Activated CD4-positive, alpha-beta T cell treated with anti-CD3 and anti-CD28 coated beads for 36 hours (primary cell): ENCODE measurements at regions of chr5 and their contacts with region 1.

Region 1: GRCh38 chr5:179623003-179623880 is at the start of gene HNRNPH1:
- DNase-seq: peak; percentile 99
- ATAC-seq: peak; percentile 79
- H3K4me3 Mint-ChIP-seq: peak within 1 kb of the TSS; percentile 94
- H3K27ac Mint-ChIP-seq: peak within 1 kb of the TSS; percentile 100
- H3K4me1 Mint-ChIP-seq: peaks cover 37% of the 10 kb centered on the region
- H3K27me3 Mint-ChIP-seq: no peaks in the 10 kb centered on the region
- total RNA-seq, gene HNRNPH1: 634 to 659 TPM

Region 2: GRCh38 chr5:178626484-178627258 is 996.6 kb before region 1 on chr5 and contains the start of gene CLK4:
- CTCF ChIA-PET with region 1: interaction called, 4 read pairs
- POLR2A ChIA-PET with region 1: no interaction called
- intact Hi-C with region 1: loop called in 1 of 2 experiments (anchors 2 kb)
- DNase-seq: peak; percentile 98
- ATAC-seq: peak; percentile 79
- H3K4me3 Mint-ChIP-seq: peak within 1 kb of the TSS; percentile 93
- H3K27ac Mint-ChIP-seq: peak within 1 kb of the TSS; percentile 98
- H3K4me1 Mint-ChIP-seq: peaks cover 25% of the 10 kb centered on the region
- H3K27me3 Mint-ChIP-seq: no peaks in the 10 kb centered on the region
- total RNA-seq, gene CLK4: 21.2 to 22.6 TPM

Region 3: DNA sequence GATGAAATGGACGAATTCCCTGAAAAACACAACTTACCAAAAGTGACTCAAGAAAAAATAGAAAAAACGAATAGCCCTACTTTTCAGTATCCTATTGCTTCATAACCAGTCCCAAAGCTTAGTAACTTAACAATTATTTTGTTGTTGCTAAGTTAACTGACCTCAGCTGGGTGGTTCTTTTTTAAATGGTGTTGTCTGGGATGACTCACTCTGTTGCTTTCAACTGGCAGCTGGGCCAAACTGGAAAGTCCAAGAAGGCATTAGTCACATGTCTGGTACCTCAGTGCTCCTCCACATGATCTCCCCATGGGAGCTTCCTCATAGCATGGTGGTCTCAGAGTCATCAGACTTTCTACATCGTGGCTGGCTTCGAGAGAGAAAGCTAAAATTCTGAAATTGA is 230.2 kb before region 1 on chr5:
- CTCF ChIA-PET with region 1: no interaction called
- POLR2A ChIA-PET with region 1: no interaction called
- intact Hi-C with region 1: no loop called
- DNase-seq: no peak
- ATAC-seq: no peak
- H3K4me3 Mint-ChIP-seq: no peak overlapping the region
- H3K27ac Mint-ChIP-seq: no peak overlapping the region
- H3K4me1 Mint-ChIP-seq: no peaks in the 10 kb centered on the region
- H3K27me3 Mint-ChIP-seq: peaks cover 2% of the 10 kb centered on the region

Region 4: DNA sequence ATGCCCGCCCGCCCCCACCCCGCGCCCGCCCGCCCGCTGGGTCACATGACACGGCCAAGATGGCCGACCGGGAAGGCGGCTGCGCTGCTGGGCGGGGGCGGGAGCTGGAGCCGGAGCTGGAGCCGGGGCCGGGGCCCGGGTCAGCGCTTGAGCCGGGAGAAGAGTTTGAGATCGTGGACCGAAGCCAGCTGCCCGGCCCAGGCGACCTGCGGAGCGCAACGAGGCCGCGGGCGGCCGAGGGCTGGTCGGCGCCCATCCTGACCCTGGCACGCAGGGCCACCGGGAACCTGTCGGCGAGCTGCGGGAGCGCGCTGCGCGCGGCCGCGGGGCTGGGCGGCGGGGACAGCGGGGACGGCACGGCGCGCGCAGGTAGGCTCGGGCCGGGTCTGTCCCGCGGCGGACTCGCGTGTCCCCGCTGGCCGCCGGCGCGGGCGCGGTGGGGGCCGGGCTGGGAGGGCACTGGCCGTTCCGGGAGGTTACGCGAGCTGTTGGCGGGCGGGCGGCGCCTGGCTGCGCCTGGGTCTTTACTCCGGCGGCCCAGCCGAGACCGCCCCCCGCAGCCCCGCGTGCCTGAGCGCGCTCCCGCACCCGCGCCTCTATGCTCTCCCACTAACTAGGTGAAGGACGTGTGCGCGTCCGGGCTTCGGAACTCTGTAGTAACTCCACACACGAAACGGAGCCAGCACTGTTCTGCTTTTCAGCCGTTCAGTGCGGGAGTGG is 72.6 kb before region 1 on chr5 and contains the start of gene RUFY1:
- CTCF ChIA-PET with region 1: no interaction called
- POLR2A ChIA-PET with region 1: interaction called, 7 read pairs
- intact Hi-C with region 1: loop called (anchors 1 to 5 kb)
- DNase-seq: peak; percentile 89
- ATAC-seq: peak; percentile 80
- H3K4me3 Mint-ChIP-seq: peak within 1 kb of the TSS; percentile 96
- H3K27ac Mint-ChIP-seq: peak within 1 kb of the TSS; percentile 99
- H3K4me1 Mint-ChIP-seq: peaks cover 37% of the 10 kb centered on the region
- H3K27me3 Mint-ChIP-seq: no peaks in the 10 kb centered on the region
- total RNA-seq, gene RUFY1: 29.6 to 33.8 TPM

Region 5: GRCh38 chr5:179697993-179698934 is 75.0 kb after region 1 on chr5:
- CTCF ChIA-PET with region 1: no interaction called
- POLR2A ChIA-PET with region 1: interaction called, 11 read pairs
- intact Hi-C with region 1: loop called (anchors 1 kb)
- DNase-seq: peak; percentile 99
- ATAC-seq: peak; percentile 89
- H3K4me3 Mint-ChIP-seq: peak overlapping the region; percentile 94
- H3K27ac Mint-ChIP-seq: peak overlapping the region; percentile 100
- H3K4me1 Mint-ChIP-seq: peaks cover 34% of the 10 kb centered on the region
- H3K27me3 Mint-ChIP-seq: no peaks in the 10 kb centered on the region

Region 6: DNA sequence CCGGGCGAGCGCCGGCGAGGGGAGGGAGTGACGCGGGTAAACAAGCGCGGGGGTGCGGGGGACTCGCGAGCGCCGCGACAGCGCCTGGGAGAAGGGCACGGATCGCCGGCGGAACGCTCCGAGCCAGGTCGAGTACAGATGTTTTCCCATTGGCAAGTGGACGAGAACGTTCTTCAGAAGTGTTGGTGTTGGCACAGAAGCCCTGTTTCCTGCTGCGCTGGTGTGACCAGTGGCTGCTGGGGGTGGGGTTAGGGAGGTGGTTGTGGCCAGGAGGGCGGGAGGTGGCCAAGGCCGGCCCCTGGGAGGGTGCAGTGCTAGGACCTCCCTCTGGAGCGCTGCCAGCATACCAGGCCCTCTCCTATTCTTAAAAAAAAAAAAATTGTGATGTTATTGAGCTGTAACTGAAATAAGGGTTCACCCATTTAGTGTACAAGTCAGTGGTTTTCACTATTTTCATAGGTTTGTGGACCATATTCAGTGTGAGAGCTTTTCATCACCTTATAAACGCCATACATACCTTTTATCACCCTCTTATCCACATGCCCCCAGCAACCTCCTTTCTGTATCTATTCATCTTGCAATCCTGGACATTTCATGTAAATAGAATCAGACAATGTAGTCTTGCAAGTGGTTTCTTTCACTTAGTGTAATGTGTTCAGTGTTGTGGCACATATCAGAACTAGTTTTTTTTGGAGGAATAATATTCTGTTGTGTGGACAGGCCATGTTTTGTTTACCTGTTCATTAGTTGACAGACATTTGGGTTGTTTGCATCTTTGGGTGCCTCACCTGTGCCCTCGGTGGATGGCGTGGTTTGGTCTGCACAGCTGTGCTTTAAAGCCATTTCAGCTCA is 198.6 kb after region 1 on chr5:
- CTCF ChIA-PET with region 1: no interaction called
- POLR2A ChIA-PET with region 1: interaction called, 3 read pairs
- intact Hi-C with region 1: loop called (anchors 1 to 5 kb)
- DNase-seq: peak; percentile 92
- ATAC-seq: peak; percentile 71
- H3K4me3 Mint-ChIP-seq: peak overlapping the region; percentile 92
- H3K27ac Mint-ChIP-seq: peak overlapping the region; percentile 90
- H3K4me1 Mint-ChIP-seq: peaks cover 38% of the 10 kb centered on the region
- H3K27me3 Mint-ChIP-seq: peaks cover 2% of the 10 kb centered on the region

Region 7: DNA sequence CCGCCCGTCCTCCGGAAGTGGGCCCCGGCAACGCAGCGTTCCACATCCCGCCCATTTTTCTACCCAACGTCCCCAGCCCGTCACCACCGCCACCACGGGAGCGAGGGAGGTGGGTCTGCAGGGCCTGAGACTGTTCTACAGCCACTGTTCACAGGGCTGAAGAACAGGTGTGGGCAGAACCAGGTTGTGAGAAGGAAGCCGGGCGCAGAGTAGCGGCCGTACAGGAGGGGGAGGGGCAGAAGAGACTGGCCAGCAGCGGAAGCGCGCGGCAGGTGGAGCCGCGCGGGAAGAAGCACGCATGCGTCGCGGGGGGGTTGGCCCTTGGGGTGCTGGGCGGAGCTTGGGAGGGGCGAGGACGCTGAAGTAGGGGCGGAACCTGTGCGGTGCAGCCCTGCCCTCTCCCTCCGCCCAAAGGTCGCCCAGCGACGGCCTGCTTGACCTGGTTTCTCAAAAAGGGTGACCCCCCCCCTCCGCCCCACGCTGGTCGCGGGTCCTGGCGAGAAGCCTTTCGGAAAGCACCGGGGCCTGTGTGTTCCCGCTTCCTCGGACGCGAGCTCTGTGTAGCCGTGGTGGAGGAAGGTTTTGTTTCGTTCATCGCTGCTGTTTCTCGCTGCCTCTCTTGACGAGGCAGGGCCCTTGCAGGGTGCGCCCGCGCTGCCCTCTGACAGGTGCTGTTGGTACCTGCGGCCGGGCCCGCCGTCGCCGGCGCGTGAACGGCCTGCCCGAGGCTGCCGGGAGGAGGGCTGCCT is 1187.1 kb after region 1 on chr5:
- CTCF ChIA-PET with region 1: no interaction called
- POLR2A ChIA-PET with region 1: no interaction called
- intact Hi-C with region 1: loop called in 1 of 2 experiments (anchors 5 kb)
- DNase-seq: peak; percentile 98
- ATAC-seq: peak; percentile 79
- H3K4me3 Mint-ChIP-seq: peak overlapping the region; percentile 91
- H3K27ac Mint-ChIP-seq: peak overlapping the region; percentile 97
- H3K4me1 Mint-ChIP-seq: peaks cover 72% of the 10 kb centered on the region
- H3K27me3 Mint-ChIP-seq: no peaks in the 10 kb centered on the region